ENCODE measurements at regions of chr15 and their contacts with region 1.

Region 1: GRCh38 chr15:47987908-47988532 is 132.8 kb upstream of the SLC24A5 start:
- DNase-seq: peak; percentile 45
- H3K4me3 ChIP-seq: no peak overlapping the region; a peak in 1 of 4 replicates
- H3K27ac ChIP-seq: no peak overlapping the region
- H3K4me1 ChIP-seq: peaks cover 0 to 3% of the 10 kb centered on the region in 2 experiments; a peak in 2 of 4 replicates
- H3K27me3 ChIP-seq: no peaks in the 10 kb centered on the region
- CTCF ChIP-seq: peak; percentile 76
- EP300 ChIP-seq: no peak; a peak in 1 of 4 replicates
- RAD21 ChIP-seq: peak; percentile 98

Region 2: GRCh38 chr15:47711654-47712053 is 276.4 kb before region 1 on chr15:
- CTCF ChIA-PET with region 1: interaction called, 40 read pairs
- POLR2A ChIA-PET with region 1: no interaction called
- DNase-seq: peak; percentile 38
- H3K4me3 ChIP-seq: no peak overlapping the region
- H3K27ac ChIP-seq: no peak overlapping the region
- H3K4me1 ChIP-seq: peaks cover 2 to 6% of the 10 kb centered on the region in 2 experiments; a peak in 3 of 4 replicates
- H3K27me3 ChIP-seq: 0 out of 2 replicates have a peak, but pooled peaks cover 21% of the 10 kb centered on the region
- CTCF ChIP-seq: peak; percentile 77
- EP300 ChIP-seq: no peak
- RAD21 ChIP-seq: peak; percentile 65

Region 3: GRCh38 chr15:47726399-47726823 is 261.6 kb before region 1 on chr15:
- CTCF ChIA-PET with region 1: interaction called, 11 read pairs
- POLR2A ChIA-PET with region 1: no interaction called
- DNase-seq: no peak
- H3K4me3 ChIP-seq: no peak overlapping the region
- H3K27ac ChIP-seq: no peak overlapping the region
- H3K4me1 ChIP-seq: peaks cover 0 to 11% of the 10 kb centered on the region in 2 experiments; a peak in 1 of 4 replicates
- H3K27me3 ChIP-seq: 0 out of 2 replicates have a peak, but pooled peaks cover 5% of the 10 kb centered on the region
- CTCF ChIP-seq: no peak
- EP300 ChIP-seq: no peak
- RAD21 ChIP-seq: no peak

Region 4: DNA sequence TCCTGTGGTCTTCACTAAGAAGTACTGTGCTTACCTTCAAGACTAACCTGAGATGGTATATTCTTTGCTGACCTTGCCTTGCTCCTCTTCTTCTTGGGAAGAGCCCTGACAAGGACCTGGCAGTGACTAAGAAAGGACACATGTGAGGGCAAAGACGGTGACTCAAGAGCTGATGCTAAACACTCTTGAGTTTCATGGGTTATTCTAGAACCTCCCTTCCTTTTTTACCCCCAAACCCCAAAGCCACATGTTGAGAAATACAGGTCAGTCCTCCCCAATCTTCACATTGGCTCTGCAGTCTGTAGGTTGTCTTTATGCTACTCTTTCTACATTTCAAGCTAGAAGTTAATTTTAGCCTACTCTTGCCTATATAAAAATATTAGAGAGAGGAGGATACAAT is 70.1 kb before region 1 on chr15:
- CTCF ChIA-PET with region 1: no interaction called
- POLR2A ChIA-PET with region 1: no interaction called
- DNase-seq: no peak
- H3K4me3 ChIP-seq: no peak overlapping the region
- H3K27ac ChIP-seq: no peak overlapping the region
- H3K4me1 ChIP-seq: no peaks in the 10 kb centered on the region; a peak in 2 of 4 replicates
- H3K27me3 ChIP-seq: no peaks in the 10 kb centered on the region
- CTCF ChIP-seq: no peak
- EP300 ChIP-seq: no peak
- RAD21 ChIP-seq: no peak

Region 5: DNA sequence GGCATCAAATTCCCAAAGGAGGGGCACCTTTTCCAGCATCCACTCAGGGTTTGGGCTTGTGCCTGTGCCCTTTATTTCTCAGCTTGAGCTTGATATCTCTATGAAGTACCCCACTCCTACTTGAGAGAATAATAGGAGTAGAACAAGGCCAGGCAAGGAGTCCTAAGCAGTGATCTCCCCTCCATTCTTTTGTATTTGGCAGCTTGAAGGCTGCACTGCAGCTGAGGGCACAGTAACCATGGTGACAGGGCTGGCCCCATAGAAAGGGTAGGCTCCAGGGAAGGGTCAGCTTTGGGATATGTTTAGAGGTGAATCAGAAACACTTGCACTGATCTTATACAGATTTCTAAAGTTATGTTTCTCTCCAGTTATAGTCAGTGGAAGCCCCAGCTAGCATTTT is 12.6 kb before region 1 on chr15:
- CTCF ChIA-PET with region 1: interaction called, 13 read pairs
- POLR2A ChIA-PET with region 1: no interaction called
- DNase-seq: no peak
- H3K4me3 ChIP-seq: no peak overlapping the region
- H3K27ac ChIP-seq: no peak overlapping the region
- H3K4me1 ChIP-seq: no peaks in the 10 kb centered on the region
- H3K27me3 ChIP-seq: no peaks in the 10 kb centered on the region
- CTCF ChIP-seq: no peak
- EP300 ChIP-seq: no peak
- RAD21 ChIP-seq: no peak

Region 6: DNA sequence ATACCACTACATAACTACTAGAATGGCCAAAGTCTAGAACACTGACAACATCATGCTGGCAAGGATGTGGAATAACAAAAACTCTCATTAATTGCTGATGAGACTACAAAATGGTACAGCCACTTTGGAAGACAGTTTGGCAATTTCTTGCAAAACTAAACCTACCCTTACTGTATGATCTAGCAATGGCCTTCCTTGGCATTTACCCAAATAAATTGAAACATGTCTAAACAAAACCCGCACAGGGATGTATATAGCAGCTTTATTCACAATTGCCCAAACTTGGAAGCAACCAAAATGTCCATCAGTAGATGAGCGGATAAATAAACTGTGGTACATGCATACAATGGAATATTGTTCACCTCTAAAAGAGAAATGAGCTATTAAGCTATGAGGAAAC is 44.9 kb after region 1 on chr15:
- CTCF ChIA-PET with region 1: no interaction called
- POLR2A ChIA-PET with region 1: no interaction called
- DNase-seq: no peak
- H3K4me3 ChIP-seq: no peak overlapping the region
- H3K27ac ChIP-seq: no peak overlapping the region
- H3K4me1 ChIP-seq: peaks cover 0 to 2% of the 10 kb centered on the region in 2 experiments; a peak in 2 of 4 replicates
- H3K27me3 ChIP-seq: no peaks in the 10 kb centered on the region; the same call in 1 of the 2 replicates
- CTCF ChIP-seq: no peak
- EP300 ChIP-seq: no peak
- RAD21 ChIP-seq: no peak

Measured in SK-N-SH (cell line).